A673 (cell line): ENCODE measurements at regions of chr2 and their contacts with region 1.

Region 1: GRCh38 chr2:121071034-121071504 is 213.9 kb downstream of the TFCP2L1 start:
- DNase-seq: peak; percentile 68
- H3K4me3 ChIP-seq: no peak overlapping the region
- H3K27ac ChIP-seq: no peak overlapping the region
- H3K4me1 ChIP-seq: peaks cover 5% of the 10 kb centered on the region
- H3K27me3 ChIP-seq: no peaks in the 10 kb centered on the region
- CTCF ChIP-seq: peak; percentile 93

Region 2: DNA sequence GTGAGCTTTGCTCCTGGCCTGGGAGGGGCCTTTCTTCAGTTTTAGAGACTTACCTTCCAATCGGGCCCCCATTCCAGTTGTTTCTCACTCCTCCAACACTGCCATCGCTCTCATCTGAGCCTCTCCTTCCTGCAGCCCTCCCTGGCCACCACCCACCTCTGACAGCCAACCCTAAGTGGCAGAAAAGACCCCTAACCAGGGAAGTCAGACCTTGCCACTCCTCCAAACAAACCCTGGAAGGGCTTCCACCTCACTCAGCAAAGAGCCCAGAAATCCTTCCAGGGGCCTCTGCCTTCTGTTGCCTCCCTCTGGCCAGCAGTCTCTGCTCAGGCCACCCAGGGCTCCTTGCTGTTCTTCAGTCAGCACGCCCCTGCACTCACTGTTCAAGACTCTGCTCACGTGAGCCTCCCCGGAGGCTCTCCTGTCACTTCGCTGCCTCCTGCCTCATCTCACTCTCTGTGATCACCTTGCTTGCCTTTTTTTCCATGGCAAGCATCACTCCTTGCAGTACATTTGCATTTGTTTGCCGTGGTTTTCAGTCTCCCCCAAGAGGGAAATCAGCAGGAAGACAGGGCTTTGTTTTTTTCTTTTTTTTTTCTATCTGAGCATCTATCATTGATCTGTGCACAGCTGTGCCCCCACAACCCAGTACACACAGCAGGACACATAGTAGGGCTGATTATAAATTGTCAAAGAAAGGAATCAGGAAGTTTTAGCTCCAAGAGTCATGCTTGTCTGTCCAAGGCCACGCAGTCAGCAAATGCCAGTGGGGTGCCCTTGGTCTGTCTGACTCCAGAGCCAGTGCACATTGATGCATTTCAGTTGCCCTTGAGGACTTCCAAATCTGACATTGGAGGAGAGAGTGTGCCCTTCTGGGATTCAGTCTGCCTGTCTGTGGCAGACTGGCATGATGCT is 641.2 kb before region 1 on chr2:
- CTCF ChIA-PET with region 1: no interaction called
- POLR2A ChIA-PET with region 1: no interaction called
- intact Hi-C with region 1: no loop called
- DNase-seq: no peak
- H3K4me3 ChIP-seq: no peak overlapping the region
- H3K27ac ChIP-seq: no peak overlapping the region
- H3K4me1 ChIP-seq: no peaks in the 10 kb centered on the region
- H3K27me3 ChIP-seq: peaks cover 7% of the 10 kb centered on the region
- CTCF ChIP-seq: no peak

Region 3: GRCh38 chr2:120693121-120693520 is 377.9 kb before region 1 on chr2:
- CTCF ChIA-PET with region 1: interaction called, 11 read pairs
- POLR2A ChIA-PET with region 1: no interaction called
- intact Hi-C with region 1: loop called (anchors 1 kb)
- DNase-seq: no peak
- H3K4me3 ChIP-seq: no peak overlapping the region
- H3K27ac ChIP-seq: no peak overlapping the region
- H3K4me1 ChIP-seq: no peaks in the 10 kb centered on the region
- H3K27me3 ChIP-seq: peaks cover 10% of the 10 kb centered on the region
- CTCF ChIP-seq: no peak

Region 4: GRCh38 chr2:121130301-121130850 is 59.3 kb after region 1 on chr2:
- CTCF ChIA-PET with region 1: no interaction called
- POLR2A ChIA-PET with region 1: no interaction called
- intact Hi-C with region 1: no loop called
- DNase-seq: no peak
- H3K4me3 ChIP-seq: no peak overlapping the region
- H3K27ac ChIP-seq: no peak overlapping the region
- H3K4me1 ChIP-seq: no peaks in the 10 kb centered on the region
- H3K27me3 ChIP-seq: peaks cover 2% of the 10 kb centered on the region
- CTCF ChIP-seq: no peak

Region 5: GRCh38 chr2:121171625-121172119 is 100.6 kb after region 1 on chr2:
- CTCF ChIA-PET with region 1: no interaction called
- POLR2A ChIA-PET with region 1: no interaction called
- intact Hi-C with region 1: no loop called
- DNase-seq: no peak
- H3K4me3 ChIP-seq: no peak overlapping the region
- H3K27ac ChIP-seq: no peak overlapping the region
- H3K4me1 ChIP-seq: no peaks in the 10 kb centered on the region
- H3K27me3 ChIP-seq: no peaks in the 10 kb centered on the region
- CTCF ChIP-seq: no peak

Region 6: DNA sequence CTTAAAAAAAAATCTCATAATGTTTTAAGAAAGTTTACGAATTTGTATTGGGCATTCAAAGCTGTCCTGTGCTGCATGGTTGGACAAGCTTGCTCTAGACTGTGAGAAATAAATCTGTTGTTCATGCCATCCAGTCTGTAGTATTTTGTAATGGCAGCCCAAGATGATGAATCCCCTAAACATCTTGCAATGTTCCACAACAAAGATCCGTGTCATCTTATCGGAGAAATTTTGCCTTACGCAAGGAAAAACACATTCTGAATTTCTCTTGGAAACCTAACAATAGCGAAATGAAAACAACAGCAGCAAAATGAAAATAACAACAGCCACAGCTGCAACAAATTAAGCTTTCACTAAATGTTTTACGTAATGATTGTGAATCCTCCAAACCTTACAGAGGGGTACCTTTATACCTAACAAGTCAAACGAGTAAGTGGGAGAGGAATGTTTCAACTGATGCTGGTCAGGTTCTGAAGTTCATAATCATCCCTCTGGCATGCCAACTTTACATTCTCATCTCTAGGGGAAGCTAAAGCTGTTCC is 383.6 kb after region 1 on chr2:
- CTCF ChIA-PET with region 1: no interaction called
- POLR2A ChIA-PET with region 1: no interaction called
- intact Hi-C with region 1: no loop called
- DNase-seq: no peak
- H3K4me3 ChIP-seq: no peak overlapping the region
- H3K27ac ChIP-seq: no peak overlapping the region
- H3K4me1 ChIP-seq: no peaks in the 10 kb centered on the region
- H3K27me3 ChIP-seq: no peaks in the 10 kb centered on the region
- CTCF ChIP-seq: no peak